Heart right ventricle (tissue), 16 donors: ENCODE measurements at regions of chr15 and their contacts with region 1.

Region 1: DNA sequence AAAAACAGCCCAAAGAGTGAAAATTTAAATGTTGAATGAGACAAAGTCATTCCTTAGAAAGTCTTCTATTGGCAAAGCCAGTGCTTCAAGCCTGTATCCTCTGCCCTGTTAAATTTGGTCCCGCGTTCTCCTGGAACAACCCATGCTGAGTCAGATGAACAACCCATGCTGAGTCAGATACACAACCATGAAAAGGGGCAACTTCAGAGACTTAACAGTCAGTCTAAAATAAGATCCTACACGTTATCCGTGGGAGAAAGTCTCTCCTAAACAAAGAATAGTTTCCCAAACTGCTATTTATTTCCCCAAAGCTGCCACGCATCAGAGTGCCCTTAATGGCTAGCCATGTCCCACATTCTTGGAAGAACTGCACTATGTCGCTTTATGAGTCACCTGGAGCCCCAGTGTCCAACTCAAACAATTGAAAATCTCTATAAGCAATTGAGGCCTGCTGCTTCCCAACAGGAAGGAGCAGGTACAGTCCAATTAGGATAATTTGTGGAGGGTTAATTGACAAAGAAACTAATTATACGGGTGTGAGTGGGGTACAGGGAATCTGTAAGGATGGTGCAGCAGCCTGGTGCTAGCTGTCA is 66.1 kb downstream of the WHAMM start:
- DNase-seq: no peak
- ATAC-seq: no peak
- H3K4me3 ChIP-seq: no peak overlapping the region
- H3K27ac ChIP-seq: no peak overlapping the region
- H3K4me1 ChIP-seq: peaks cover 0 to 21% (median 11%) of the 10 kb centered on the region in 9 donors
- H3K27me3 ChIP-seq: no peaks in the 10 kb centered on the region
- CTCF ChIP-seq: no peak

Region 2: DNA sequence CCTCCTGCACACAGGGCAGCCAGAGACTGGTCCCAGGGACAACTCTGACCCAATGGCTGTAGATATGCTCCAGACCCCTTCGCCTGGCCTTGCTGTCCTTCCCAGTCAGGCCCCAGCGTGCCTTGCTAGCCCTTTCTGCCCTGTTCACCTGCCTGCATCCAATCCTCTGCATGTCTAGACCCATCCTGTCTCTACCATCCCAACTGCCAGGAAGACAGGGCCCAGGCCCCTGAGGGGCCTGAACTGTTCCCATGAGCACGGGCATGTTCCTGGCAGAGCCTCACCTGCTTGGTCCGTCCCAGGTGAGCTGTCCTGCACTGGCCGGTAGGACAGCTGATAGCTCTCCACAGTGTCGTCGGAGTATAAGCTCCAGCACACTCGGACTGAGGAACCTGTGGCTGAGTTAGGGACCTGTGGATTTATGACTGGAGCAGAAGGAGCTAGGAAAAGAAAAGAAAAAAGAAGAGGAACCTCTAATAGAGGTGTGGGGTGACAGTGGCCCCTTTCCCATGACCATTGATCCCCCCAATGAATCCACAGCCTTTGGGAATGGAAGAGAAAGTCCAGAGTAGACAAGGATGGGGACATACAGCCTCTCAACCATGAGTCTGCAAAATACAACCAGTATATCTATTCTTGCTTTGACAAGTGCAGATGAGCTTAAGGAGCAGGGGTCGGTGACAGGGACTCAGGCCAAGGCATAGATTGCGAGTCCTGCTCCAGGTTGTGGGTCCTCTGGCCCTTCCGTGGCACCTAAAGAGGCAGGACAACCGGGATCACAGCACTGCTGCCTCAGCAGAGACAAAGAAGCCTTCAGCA is 103.5 kb before region 1 on chr15:
- intact Hi-C with region 1: loop called in 1 of 10 experiments (anchors 5 kb)
- DNase-seq: no peak
- ATAC-seq: peak in 1 of 8 donors; percentile 41
- H3K4me3 ChIP-seq: no peak overlapping the region
- H3K27ac ChIP-seq: no peak overlapping the region
- H3K4me1 ChIP-seq: no peaks in the 10 kb centered on the region
- H3K27me3 ChIP-seq: no peaks in the 10 kb centered on the region
- CTCF ChIP-seq: no peak

Region 3: GRCh38 chr15:82849556-82850512 is 25.7 kb before region 1 on chr15:
- intact Hi-C with region 1: loop called in 1 of 10 experiments (anchors 1 kb)
- DNase-seq: peak; percentile 74 to 82
- ATAC-seq: peak; percentile 88 to 96 (median 92)
- H3K4me3 ChIP-seq: peak overlapping the region in 5 of 10 donors; percentile 9 to 36 (median 19)
- H3K27ac ChIP-seq: peak overlapping the region in 5 of 10 donors; percentile 16 to 62 (median 33)
- H3K4me1 ChIP-seq: peaks cover 0 to 16% (median 13%) of the 10 kb centered on the region in 9 donors
- H3K27me3 ChIP-seq: no peaks in the 10 kb centered on the region
- CTCF ChIP-seq: peak; percentile 50 to 90 (median 76)